ENCODE measurements at regions of chr11 and their contacts with region 1.

Region 1: GRCh38 chr11:79400717-79401686 is 39.8 kb downstream of the TENM4 start:
- DNase-seq: peak in 1 of 2 experiments; percentile 52
- H3K4me3 ChIP-seq: no peak overlapping the region
- H3K27ac ChIP-seq: no peak overlapping the region
- H3K4me1 ChIP-seq: no peaks in the 10 kb centered on the region
- H3K27me3 ChIP-seq: peaks cover 12% of the 10 kb centered on the region; the same call in 1 of the 2 replicates
- CTCF ChIP-seq: peak; percentile 96

Region 2: DNA sequence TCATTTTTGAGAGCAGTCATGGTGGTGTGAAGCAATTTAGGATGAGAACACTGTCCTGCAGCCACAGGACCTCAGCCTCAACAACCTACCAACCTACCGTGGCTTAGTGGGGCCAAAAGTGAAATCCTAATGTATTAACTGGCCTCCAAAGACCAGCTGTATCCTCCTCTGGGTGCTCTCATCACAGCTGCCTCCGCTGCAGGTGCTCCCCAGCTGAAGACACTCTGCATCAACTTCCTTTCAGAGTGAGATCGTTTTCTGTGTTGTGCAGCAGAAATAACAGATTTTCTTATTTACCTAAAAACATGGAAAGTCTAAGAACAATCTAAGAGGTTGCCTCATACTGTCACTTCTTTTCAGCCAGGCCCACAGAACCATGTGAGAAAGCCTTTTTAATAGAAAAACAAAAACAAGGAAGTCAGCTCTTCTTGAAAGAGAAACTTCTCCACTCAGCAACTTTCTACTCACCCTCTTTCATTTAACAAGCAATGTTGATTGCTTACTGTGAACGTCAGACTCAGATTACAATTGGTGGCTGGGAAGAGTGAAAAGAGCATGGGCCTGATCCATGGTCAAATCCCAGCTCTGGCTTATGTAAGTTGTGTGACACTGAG is 96.3 kb before region 1 on chr11:
- CTCF ChIA-PET with region 1: no interaction called
- POLR2A ChIA-PET with region 1: no interaction called
- intact Hi-C with region 1: no loop called
- DNase-seq: no peak
- H3K4me3 ChIP-seq: no peak overlapping the region
- H3K27ac ChIP-seq: no peak overlapping the region
- H3K4me1 ChIP-seq: no peaks in the 10 kb centered on the region
- H3K27me3 ChIP-seq: peaks cover 31% of the 10 kb centered on the region
- CTCF ChIP-seq: no peak

Region 3: DNA sequence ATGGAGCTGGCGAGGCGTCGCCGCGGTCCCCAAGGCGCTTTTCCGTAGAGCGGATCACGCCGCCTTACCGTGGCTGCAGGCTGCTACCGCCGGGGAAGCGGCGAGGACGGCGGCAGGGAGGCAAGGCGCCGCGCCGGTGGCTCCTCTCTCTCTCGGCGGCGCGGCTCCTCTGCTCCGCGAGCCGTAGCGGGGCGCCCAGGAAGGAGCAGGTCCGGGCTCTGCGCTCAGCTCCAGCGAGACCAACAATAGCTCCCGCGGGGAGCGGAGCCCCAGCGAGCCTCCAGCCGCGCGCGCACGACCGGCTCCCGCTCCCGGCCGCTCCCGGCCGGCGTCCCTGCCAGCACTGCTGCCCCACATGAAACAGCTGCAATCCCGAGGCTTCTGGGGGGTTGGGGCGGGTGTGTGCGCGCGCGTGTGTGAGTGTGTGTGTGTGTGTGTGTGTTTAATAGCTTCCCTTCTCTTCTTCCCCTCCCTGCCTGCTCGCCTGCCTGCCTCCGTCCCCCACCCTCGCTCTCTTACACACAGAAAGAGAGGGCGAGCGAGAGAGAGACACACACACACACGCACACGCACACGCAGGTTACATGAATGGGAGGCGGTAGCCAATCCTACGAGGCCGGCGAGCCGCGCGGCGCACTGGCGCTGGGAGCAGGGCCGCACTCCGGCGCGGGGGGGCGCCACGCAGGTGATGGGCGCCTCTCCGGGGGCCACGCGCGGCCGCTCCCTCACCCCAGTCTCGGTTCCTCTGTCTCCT is 39.6 kb after region 1 on chr11 and contains the start of gene TENM4:
- CTCF ChIA-PET with region 1: interaction called, 14 read pairs
- POLR2A ChIA-PET with region 1: no interaction called
- intact Hi-C with region 1: loop called (anchors 5 kb)
- DNase-seq: no peak
- H3K4me3 ChIP-seq: no peak within 1 kb of the TSS
- H3K27ac ChIP-seq: no peak within 1 kb of the TSS
- H3K4me1 ChIP-seq: no peaks in the 10 kb centered on the region
- H3K27me3 ChIP-seq: peaks cover 54% of the 10 kb centered on the region
- CTCF ChIP-seq: no peak
- total RNA-seq, gene TENM4: 0.25 TPM in 1 of 2 replicates, not detected in the other

Region 4: GRCh38 chr11:79447038-79447786 is 46.2 kb after region 1 on chr11:
- CTCF ChIA-PET with region 1: no interaction called
- POLR2A ChIA-PET with region 1: no interaction called
- intact Hi-C with region 1: loop called (anchors 5 kb)
- DNase-seq: no peak
- H3K4me3 ChIP-seq: no peak overlapping the region
- H3K27ac ChIP-seq: no peak overlapping the region
- H3K4me1 ChIP-seq: no peaks in the 10 kb centered on the region
- H3K27me3 ChIP-seq: peaks cover 15% of the 10 kb centered on the region; the same call in 1 of the 2 replicates
- CTCF ChIP-seq: no peak

Region 5: DNA sequence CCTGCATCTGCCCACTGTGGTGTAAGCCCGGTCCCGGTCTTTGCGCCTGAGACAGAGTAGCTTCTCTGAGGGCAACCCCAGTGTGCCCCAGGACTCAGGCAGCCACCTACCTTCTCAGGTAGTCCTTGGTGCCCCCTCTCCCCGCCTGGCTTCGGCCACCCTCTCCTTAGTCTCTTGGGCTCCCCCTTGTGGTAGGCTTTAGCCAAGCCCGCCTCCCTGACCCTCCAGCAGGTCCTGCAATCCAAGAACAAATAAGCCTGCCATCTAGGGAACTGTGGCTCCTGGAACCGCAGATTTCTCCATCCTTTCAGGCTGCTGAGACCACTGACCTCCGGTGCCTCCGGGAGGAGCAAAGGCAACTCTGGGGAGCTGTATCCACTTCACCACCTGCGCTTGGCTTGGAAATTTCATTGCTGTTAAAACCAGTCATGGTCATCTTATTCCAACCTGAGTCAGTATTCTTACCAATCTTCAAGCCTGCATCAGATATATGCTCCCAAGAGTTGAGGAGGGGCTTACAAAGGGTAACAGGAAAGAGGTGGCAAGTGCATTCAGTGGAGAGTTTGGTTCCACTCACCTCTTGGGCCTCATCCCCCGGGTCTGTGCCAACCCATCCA is 92.7 kb after region 1 on chr11:
- CTCF ChIA-PET with region 1: interaction called, 8 read pairs
- POLR2A ChIA-PET with region 1: no interaction called
- intact Hi-C with region 1: loop called (anchors 1 kb)
- DNase-seq: peak; percentile 47 to 72
- H3K4me3 ChIP-seq: no peak overlapping the region
- H3K27ac ChIP-seq: no peak overlapping the region
- H3K4me1 ChIP-seq: no peaks in the 10 kb centered on the region
- H3K27me3 ChIP-seq: peaks cover 47% of the 10 kb centered on the region
- CTCF ChIP-seq: peak; percentile 99

Region 6: GRCh38 chr11:80963496-80963895 is 1562.5 kb after region 1 on chr11:
- CTCF ChIA-PET with region 1: no interaction called
- POLR2A ChIA-PET with region 1: no interaction called
- intact Hi-C with region 1: loop called (anchors 5 kb)
- DNase-seq: no peak
- H3K4me3 ChIP-seq: no peak overlapping the region
- H3K27ac ChIP-seq: no peak overlapping the region
- H3K4me1 ChIP-seq: peaks cover 3% of the 10 kb centered on the region; the same call in 1 of the 2 replicates
- H3K27me3 ChIP-seq: no peaks in the 10 kb centered on the region
- CTCF ChIP-seq: no peak